Pancreas (tissue), 10 donors: ENCODE measurements at regions of chr2 and their contacts with region 1.

Region 1: GRCh38 chr2:105102963-105103421 is 65.1 kb downstream of the MRPS9 start:
- DNase-seq: no peak
- ATAC-seq: no peak
- H3K4me3 ChIP-seq: no peak overlapping the region
- H3K27ac ChIP-seq: no peak overlapping the region
- H3K4me1 ChIP-seq: no peaks in the 10 kb centered on the region
- H3K27me3 ChIP-seq: no peaks in the 10 kb centered on the region
- CTCF ChIP-seq: no peak

Region 2: GRCh38 chr2:104078431-104079162 is 1024.4 kb before region 1 on chr2:
- intact Hi-C with region 1: no loop called
- DNase-seq: peak in 1 of 6 donors; percentile 41
- ATAC-seq: no peak
- H3K4me3 ChIP-seq: no peak overlapping the region
- H3K27ac ChIP-seq: no peak overlapping the region
- H3K4me1 ChIP-seq: no peaks in the 10 kb centered on the region
- H3K27me3 ChIP-seq: no peaks in the 10 kb centered on the region
- CTCF ChIP-seq: no peak

Region 3: GRCh38 chr2:105243961-105244360 is 141.0 kb after region 1 on chr2:
- intact Hi-C with region 1: loop called in 1 of 3 experiments (anchors 10 kb)
- DNase-seq: no peak
- ATAC-seq: no peak
- H3K4me3 ChIP-seq: no peak overlapping the region
- H3K27ac ChIP-seq: no peak overlapping the region
- H3K4me1 ChIP-seq: no peaks in the 10 kb centered on the region
- H3K27me3 ChIP-seq: no peaks in the 10 kb centered on the region
- CTCF ChIP-seq: no peak